ENCODE measurements at regions of chr11 and their contacts with region 1.

Region 1: DNA sequence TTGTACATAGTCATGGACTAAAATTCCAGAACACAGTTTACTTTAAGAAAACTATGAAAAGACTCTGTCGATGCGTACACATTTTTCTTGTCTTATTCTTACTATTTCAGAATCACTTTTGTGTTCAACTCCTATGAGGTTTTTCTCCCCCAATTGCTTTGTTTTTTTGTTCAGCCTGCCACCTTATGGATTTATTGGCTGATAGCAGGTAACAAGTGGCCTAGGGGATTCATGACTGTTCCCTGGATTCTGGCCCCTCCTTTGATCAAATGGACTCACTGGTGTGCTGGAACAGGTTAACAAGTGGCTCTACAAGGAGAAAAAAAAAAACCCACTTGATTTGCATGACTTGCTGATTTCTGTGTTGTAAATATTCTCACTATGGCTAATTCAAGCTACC is 10.6 kb downstream of the MMP20 start:
- DNase-seq: peak; percentile 14
- H3K4me3 Mint-ChIP-seq: no peak overlapping the region
- H3K27ac Mint-ChIP-seq: no peak overlapping the region
- H3K4me1 Mint-ChIP-seq: peaks cover 6% of the 10 kb centered on the region
- H3K27me3 Mint-ChIP-seq: no peaks in the 10 kb centered on the region
- CTCF ChIP-seq: no peak

Region 2: DNA sequence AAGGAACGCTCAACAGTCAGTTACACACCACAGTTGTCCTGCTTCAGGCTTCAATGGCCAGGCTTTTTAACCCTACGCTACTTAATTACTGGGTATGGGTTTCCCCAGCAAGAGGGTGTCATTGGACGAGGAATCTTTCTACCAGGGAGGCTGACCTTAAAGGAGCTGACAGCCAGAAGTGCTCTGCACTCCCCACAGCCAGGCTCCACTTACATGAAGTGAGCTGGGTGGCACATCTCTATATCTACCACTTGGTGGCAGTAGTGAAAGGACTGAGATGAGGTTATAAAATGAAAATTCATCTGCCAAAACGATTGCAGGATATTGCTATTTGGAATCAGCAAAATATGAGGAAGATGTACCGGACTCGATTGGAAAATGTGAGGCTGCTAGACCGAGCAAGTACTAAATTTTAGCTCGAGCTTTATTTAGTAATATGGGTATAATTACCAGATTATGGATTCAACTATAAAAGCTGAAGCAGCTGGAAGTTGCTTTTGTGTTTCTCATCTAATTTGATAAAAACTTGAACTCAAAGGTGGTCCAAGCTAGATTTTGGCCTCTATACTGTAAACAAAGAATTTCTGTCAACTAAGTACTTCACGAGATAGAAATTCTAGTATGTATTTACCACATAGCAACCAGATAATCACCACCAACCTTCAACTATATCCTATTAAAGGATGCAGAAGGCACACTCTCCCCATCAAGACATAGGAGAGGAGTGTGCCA is 753.6 kb before region 1 on chr11:
- CTCF ChIA-PET with region 1: interaction called, 3 read pairs
- POLR2A ChIA-PET with region 1: interaction called, 4 read pairs
- intact Hi-C with region 1: loop called (anchors 2 kb)
- DNase-seq: peak; percentile 67
- H3K4me3 Mint-ChIP-seq: no peak overlapping the region
- H3K27ac Mint-ChIP-seq: no peak overlapping the region
- H3K4me1 Mint-ChIP-seq: peaks cover 13% of the 10 kb centered on the region
- H3K27me3 Mint-ChIP-seq: no peaks in the 10 kb centered on the region
- CTCF ChIP-seq: peak; percentile 61

Region 3: DNA sequence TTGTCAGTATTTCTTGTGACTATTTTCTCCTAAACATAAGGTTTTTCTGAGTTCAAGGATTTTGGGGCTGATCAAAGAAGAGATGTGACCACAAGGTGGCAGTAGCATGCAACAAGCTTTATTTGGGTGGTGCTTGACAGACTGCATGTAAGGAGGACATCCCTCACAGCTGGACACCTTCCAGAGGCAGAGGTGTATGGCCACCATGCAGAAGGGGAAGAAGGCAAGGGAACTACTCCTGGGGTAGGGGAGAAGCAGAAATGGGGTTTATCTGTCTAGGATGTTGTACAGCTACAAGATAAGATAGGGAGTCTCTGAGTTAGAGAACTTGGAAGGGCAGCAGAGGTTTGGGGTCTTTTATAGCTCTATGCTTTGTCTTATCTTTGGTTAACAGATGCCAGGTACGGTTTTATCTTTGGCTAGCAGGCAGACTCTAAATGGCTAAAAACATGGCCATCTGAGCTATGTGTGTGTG is 272.6 kb before region 1 on chr11:
- CTCF ChIA-PET with region 1: interaction called, 62 read pairs
- POLR2A ChIA-PET with region 1: interaction called, 6 read pairs
- intact Hi-C with region 1: loop called (anchors 1 kb)
- DNase-seq: peak; percentile 91
- H3K4me3 Mint-ChIP-seq: no peak overlapping the region
- H3K27ac Mint-ChIP-seq: no peak overlapping the region
- H3K4me1 Mint-ChIP-seq: peaks cover 40% of the 10 kb centered on the region
- H3K27me3 Mint-ChIP-seq: no peaks in the 10 kb centered on the region
- CTCF ChIP-seq: peak; percentile 67

Region 4: GRCh38 chr11:102384419-102385079 is 229.9 kb before region 1 on chr11:
- CTCF ChIA-PET with region 1: interaction called, 164 read pairs
- POLR2A ChIA-PET with region 1: no interaction called
- intact Hi-C with region 1: no loop called
- DNase-seq: no peak
- H3K4me3 Mint-ChIP-seq: no peak overlapping the region
- H3K27ac Mint-ChIP-seq: no peak overlapping the region
- H3K4me1 Mint-ChIP-seq: no peaks in the 10 kb centered on the region
- H3K27me3 Mint-ChIP-seq: no peaks in the 10 kb centered on the region
- CTCF ChIP-seq: no peak

Region 5: GRCh38 chr11:102513869-102514268 is 100.6 kb before region 1 on chr11:
- CTCF ChIA-PET with region 1: interaction called, 30 read pairs
- POLR2A ChIA-PET with region 1: interaction called, 6 read pairs
- intact Hi-C with region 1: no loop called
- DNase-seq: peak; percentile 92
- H3K4me3 Mint-ChIP-seq: no peak overlapping the region
- H3K27ac Mint-ChIP-seq: peak overlapping the region; percentile 44
- H3K4me1 Mint-ChIP-seq: peaks cover 11% of the 10 kb centered on the region
- H3K27me3 Mint-ChIP-seq: no peaks in the 10 kb centered on the region
- CTCF ChIP-seq: no peak

Region 6: GRCh38 chr11:102560555-102561011 is 53.9 kb before region 1 on chr11:
- CTCF ChIA-PET with region 1: interaction called, 20 read pairs
- POLR2A ChIA-PET with region 1: interaction called, 4 read pairs
- intact Hi-C with region 1: no loop called
- DNase-seq: peak; percentile 69
- H3K4me3 Mint-ChIP-seq: peak overlapping the region; percentile 61
- H3K27ac Mint-ChIP-seq: peak overlapping the region; percentile 96
- H3K4me1 Mint-ChIP-seq: peaks cover 33% of the 10 kb centered on the region
- H3K27me3 Mint-ChIP-seq: no peaks in the 10 kb centered on the region
- CTCF ChIP-seq: no peak

Measured in MCF 10A (cell line).